ENCODE measurements at regions of chr17 and their contacts with region 1.

Region 1: DNA sequence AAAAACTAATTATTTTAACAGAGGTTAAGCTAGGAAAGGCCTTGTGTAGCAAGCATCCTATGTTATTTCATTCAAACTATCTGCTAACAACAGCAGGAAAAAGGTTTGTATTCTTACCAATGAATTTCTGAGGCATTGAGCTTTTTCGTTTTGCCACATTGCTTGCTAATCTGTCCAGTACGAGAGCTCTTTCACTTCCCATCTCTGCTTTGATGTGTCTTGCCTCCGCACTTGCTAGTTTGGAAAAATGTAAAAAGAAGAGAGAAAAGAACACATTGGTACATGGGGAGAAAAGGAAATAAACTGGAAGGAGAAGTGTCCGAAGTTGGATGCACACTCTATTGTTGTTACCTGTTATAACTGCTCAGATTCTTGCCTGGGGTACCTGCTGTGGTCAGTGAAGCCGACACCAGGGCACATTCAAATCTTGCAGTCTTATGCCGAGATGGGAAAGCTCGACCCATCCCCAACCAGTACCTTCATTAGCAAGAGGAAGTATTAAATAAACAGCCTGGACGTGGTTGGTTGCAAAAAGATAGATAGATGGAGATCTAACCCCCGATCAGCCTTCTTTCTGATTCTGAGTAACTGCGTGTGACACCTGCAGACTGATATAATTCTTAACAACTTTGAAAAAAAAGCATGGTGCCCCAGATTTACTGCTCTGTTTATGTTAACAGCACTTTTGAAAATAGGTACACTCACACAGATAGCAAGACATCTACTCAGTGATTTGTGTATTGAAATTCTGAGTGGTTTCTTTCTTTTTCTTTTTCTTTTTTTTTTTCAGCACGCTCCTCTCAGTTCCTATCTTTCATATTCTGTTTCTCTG is 40.0 kb downstream of the GRB7 start:
- DNase-seq: no peak
- ATAC-seq: peak; percentile 60
- H3K4me3 Mint-ChIP-seq: peak overlapping the region; percentile 77
- H3K27ac Mint-ChIP-seq: peak overlapping the region; percentile 88
- H3K4me1 Mint-ChIP-seq: peaks cover 86% of the 10 kb centered on the region
- H3K27me3 Mint-ChIP-seq: no peaks in the 10 kb centered on the region

Region 2: DNA sequence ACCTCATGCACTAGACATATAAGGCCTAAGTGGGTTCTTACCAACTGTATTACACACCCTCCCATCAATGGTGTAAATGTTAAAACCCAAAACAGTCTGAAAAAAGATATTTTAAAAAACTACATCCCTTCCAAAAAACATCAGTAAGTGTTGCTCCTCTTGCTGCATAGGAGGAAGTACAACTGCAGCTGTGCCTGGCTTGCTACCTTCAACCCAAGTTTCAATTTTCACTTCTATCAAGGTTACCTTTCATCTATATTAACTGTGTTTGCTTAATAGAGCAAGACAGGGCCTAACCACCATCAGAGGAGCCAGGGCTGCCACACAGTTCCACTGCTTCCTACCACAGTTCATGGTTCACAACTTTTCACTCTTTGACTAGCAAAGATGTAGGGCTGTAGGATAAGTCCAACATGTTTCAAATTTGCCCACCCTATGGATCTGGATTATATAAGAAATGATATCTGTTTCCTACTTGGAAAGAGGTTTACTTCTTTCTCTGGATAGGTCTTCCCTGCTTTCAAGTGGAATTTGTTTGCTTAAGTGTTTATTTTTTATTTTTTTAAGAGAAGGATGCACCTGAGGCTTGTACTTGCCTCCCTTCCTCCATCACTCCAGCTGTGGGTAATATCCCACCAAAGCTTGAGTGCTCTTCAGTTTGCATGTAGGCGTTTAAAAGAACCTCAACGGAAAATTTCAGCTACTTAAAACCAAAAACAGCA is 16.7 kb after region 1 on chr17:
- CTCF ChIA-PET with region 1: interaction called, 20 read pairs
- POLR2A ChIA-PET with region 1: interaction called, 7 read pairs
- DNase-seq: peak; percentile 59
- ATAC-seq: peak; percentile 72
- H3K4me3 Mint-ChIP-seq: peak overlapping the region; percentile 30
- H3K27ac Mint-ChIP-seq: peak overlapping the region; percentile 93
- H3K4me1 Mint-ChIP-seq: peaks cover 66% of the 10 kb centered on the region
- H3K27me3 Mint-ChIP-seq: no peaks in the 10 kb centered on the region

Measured in activated CD8-positive, alpha-beta T cell treated with anti-CD3 and anti-CD28 coated beads, Interleukin-2, amount 10 ng/mL, durations not matched to agents 7 days and 5 days (primary cell).